Activated CD4-positive, alpha-beta T cell treated with anti-CD3 and anti-CD28 coated beads for 36 hours (primary cell): ENCODE measurements at regions of chr11 and their contacts with region 1.

Region 1: GRCh38 chr11:94477589-94477988 is 16.1 kb downstream of the MRE11 start:
- DNase-seq: no peak
- ATAC-seq: no peak
- H3K4me3 Mint-ChIP-seq: no peak overlapping the region
- H3K27ac Mint-ChIP-seq: no peak overlapping the region
- H3K4me1 Mint-ChIP-seq: peaks cover 20% of the 10 kb centered on the region
- H3K27me3 Mint-ChIP-seq: no peaks in the 10 kb centered on the region

Region 2: GRCh38 chr11:94303966-94304958 is 173.3 kb before region 1 on chr11 and contains the start of gene IZUMO1R:
- CTCF ChIA-PET with region 1: no interaction called
- POLR2A ChIA-PET with region 1: interaction called, 11 read pairs
- intact Hi-C with region 1: no loop called
- DNase-seq: no peak
- ATAC-seq: no peak
- H3K4me3 Mint-ChIP-seq: no peak within 1 kb of the TSS
- H3K27ac Mint-ChIP-seq: no peak within 1 kb of the TSS
- H3K4me1 Mint-ChIP-seq: no peaks in the 10 kb centered on the region
- H3K27me3 Mint-ChIP-seq: peaks cover 7% of the 10 kb centered on the region
- total RNA-seq, gene IZUMO1R: not detected

Region 3: DNA sequence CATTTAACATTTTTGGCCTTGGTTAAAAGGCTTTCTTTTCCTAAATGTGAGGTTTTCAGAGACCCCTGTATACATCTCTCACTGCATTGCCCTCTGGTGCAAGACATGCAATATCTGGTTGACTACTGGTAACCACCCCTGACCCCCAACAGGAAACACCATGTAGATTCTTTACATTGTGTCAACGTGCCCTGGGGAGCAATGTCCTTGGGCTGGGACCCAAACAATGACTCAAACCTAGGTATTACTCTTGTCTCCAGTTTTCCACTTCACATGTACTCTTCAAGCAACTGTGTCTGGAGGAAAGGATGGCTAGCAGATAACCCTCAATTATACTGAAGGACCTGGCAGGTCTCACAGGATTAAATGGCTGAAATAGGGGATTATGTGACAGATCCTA is 75.2 kb before region 1 on chr11:
- CTCF ChIA-PET with region 1: no interaction called
- POLR2A ChIA-PET with region 1: interaction called, 15 read pairs
- intact Hi-C with region 1: no loop called
- DNase-seq: no peak
- ATAC-seq: no peak
- H3K4me3 Mint-ChIP-seq: no peak overlapping the region
- H3K27ac Mint-ChIP-seq: no peak overlapping the region
- H3K4me1 Mint-ChIP-seq: peaks cover 8% of the 10 kb centered on the region
- H3K27me3 Mint-ChIP-seq: peaks cover 41% of the 10 kb centered on the region